ENCODE measurements at regions of chr5 and their contacts with region 1.

Region 1: GRCh38 chr5:10658265-10658664 is 94.4 kb downstream of the ANKRD33B start:
- DNase-seq: no peak
- ATAC-seq: no peak
- H3K4me3 Mint-ChIP-seq: no peak overlapping the region
- H3K27ac Mint-ChIP-seq: no peak overlapping the region
- H3K4me1 Mint-ChIP-seq: peaks cover 13% of the 10 kb centered on the region
- H3K27me3 Mint-ChIP-seq: no peaks in the 10 kb centered on the region
- CTCF ChIP-seq: no peak

Region 2: GRCh38 chr5:10626473-10627013 is 31.7 kb before region 1 on chr5:
- CTCF ChIA-PET with region 1: no interaction called
- POLR2A ChIA-PET with region 1: no interaction called
- intact Hi-C with region 1: no loop called
- DNase-seq: no peak
- ATAC-seq: no peak
- H3K4me3 Mint-ChIP-seq: peak overlapping the region; percentile 13
- H3K27ac Mint-ChIP-seq: peak overlapping the region; percentile 35
- H3K4me1 Mint-ChIP-seq: peaks cover 67% of the 10 kb centered on the region
- H3K27me3 Mint-ChIP-seq: no peaks in the 10 kb centered on the region
- CTCF ChIP-seq: no peak

Region 3: DNA sequence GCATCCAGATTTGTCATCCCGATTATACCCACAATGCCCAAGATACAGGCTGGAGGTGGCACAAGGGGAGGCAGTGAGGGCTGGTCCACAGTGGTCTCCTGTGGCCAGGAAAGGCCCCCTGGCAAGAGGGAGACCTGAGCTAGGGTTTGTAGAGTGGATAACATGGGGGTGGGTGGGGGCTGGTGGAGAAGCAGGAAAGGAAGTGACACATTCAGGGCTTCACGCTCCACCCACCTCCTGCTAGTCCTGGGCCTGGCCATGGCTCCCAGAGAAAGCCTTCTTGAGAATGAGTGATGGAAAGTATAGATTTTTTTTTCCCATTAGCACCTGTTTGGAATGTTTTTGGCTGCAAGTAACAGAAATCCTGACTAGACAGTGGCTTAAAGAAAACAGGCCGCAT is 13.1 kb before region 1 on chr5:
- CTCF ChIA-PET with region 1: no interaction called
- POLR2A ChIA-PET with region 1: interaction called, 5 read pairs
- intact Hi-C with region 1: loop called (anchors 2 kb)
- DNase-seq: peak; percentile 11
- ATAC-seq: peak; percentile 70
- H3K4me3 Mint-ChIP-seq: no peak overlapping the region
- H3K27ac Mint-ChIP-seq: peak overlapping the region; percentile 4
- H3K4me1 Mint-ChIP-seq: peaks cover 57% of the 10 kb centered on the region
- H3K27me3 Mint-ChIP-seq: no peaks in the 10 kb centered on the region
- CTCF ChIP-seq: no peak

Measured in activated B cell treated with CpG ODN at 0.5 μM for 24 hours (primary cell).